A549 (cell line): ENCODE measurements at regions of chr5 and their contacts with region 1.

Region 1: GRCh38 chr5:10627160-10627701 is 63.4 kb downstream of the ANKRD33B start:
- DNase-seq: no peak
- ATAC-seq: peak; percentile 33 to 43; a peak in 5 of 6 replicates
- H3K4me3 ChIP-seq: peak overlapping the region; percentile 24
- H3K27ac ChIP-seq: peak overlapping the region; percentile 51 to 80
- H3K4me1 ChIP-seq: peaks cover 17% of the 10 kb centered on the region
- CTCF ChIP-seq: no peak
- EP300 ChIP-seq: no peak
- POLR2A ChIP-seq: no peak
- RAD21 ChIP-seq: no peak

Region 2: DNA sequence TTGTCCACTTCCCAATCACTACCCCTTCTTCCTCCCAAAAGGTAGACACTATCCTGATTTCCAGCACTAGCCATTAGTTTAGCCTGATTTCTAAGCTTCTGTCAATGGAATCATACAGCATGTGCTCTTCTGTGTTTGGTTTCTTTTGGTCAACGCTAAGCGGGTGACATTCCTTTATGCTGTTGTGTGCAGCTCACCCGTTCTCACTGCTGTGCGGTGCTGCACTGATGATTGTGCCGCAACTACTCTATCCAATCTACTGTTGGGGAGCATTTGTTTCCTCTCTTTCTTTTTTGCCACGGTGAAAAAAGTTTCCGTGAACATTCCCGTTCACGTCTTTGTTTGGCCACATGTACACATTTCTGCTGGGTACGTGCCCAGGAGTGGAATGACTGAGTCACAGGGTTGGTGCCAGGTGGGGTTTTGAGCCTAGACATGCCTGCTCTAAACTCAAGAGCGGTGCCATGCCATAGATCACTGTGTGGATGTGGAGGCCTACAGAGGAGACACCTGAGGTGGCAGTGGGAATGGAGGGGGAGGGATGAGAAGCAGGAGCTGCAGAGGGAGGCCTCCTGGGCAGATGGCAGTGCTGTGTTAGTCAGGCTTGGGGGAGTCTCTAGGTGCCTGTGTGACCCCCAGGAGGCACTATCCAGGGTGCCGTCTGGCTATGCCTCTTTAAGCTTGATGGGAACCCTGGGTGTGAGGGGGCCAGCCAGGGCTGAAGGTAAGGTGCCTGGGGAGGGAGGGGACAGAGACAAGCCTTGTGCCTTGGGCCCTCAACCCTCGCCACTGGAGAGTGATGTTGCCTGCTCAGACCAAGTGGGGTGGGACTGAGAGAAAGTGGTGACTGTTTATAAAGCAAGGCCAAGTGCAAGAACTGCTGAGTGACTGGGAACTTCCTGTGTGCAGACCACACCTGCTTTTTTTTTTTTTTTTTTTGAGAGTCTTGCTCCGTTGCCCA is 74.8 kb before region 1 on chr5:
- CTCF ChIA-PET with region 1: interaction called, 18 read pairs
- POLR2A ChIA-PET with region 1: interaction called, 7 read pairs
- DNase-seq: peak in 1 of 2 experiments; percentile 51
- ATAC-seq: no peak
- H3K4me3 ChIP-seq: no peak overlapping the region
- H3K27ac ChIP-seq: peak overlapping the region; percentile 85 to 92
- H3K4me1 ChIP-seq: peaks cover 76% of the 10 kb centered on the region
- CTCF ChIP-seq: no peak
- EP300 ChIP-seq: no peak
- POLR2A ChIP-seq: no peak
- RAD21 ChIP-seq: no peak

Region 3: GRCh38 chr5:10577371-10578292 is 49.6 kb before region 1 on chr5:
- CTCF ChIA-PET with region 1: interaction called, 26 read pairs
- POLR2A ChIA-PET with region 1: no interaction called
- DNase-seq: no peak
- ATAC-seq: peak in 1 of 2 experiments; percentile 47; a peak in 3 of 6 replicates
- H3K4me3 ChIP-seq: no peak overlapping the region
- H3K27ac ChIP-seq: peak overlapping the region in 1 of 2 experiments; percentile 26; a peak in 3 of 6 replicates
- H3K4me1 ChIP-seq: peaks cover 33% of the 10 kb centered on the region
- CTCF ChIP-seq: no peak
- EP300 ChIP-seq: no peak
- POLR2A ChIP-seq: no peak
- RAD21 ChIP-seq: no peak

Region 4: GRCh38 chr5:10601246-10602030 is 25.8 kb before region 1 on chr5:
- CTCF ChIA-PET with region 1: interaction called, 55 read pairs
- POLR2A ChIA-PET with region 1: no interaction called
- DNase-seq: peak; percentile 69 to 90
- ATAC-seq: peak; percentile 83 to 89
- H3K4me3 ChIP-seq: peak overlapping the region; percentile 18; the same call in 2 of the 3 replicates
- H3K27ac ChIP-seq: peak overlapping the region; percentile 77 to 87
- H3K4me1 ChIP-seq: peaks cover 43% of the 10 kb centered on the region
- CTCF ChIP-seq: no peak
- EP300 ChIP-seq: no peak; a peak in 1 of 5 replicates
- POLR2A ChIP-seq: no peak
- RAD21 ChIP-seq: no peak; a peak in 1 of 5 replicates

Region 5: GRCh38 chr5:10645146-10645545 is 17.9 kb after region 1 on chr5:
- CTCF ChIA-PET with region 1: interaction called, 12 read pairs
- POLR2A ChIA-PET with region 1: no interaction called
- DNase-seq: no peak
- ATAC-seq: peak in 1 of 2 experiments; percentile 24; a peak in 2 of 6 replicates
- H3K4me3 ChIP-seq: no peak overlapping the region
- H3K27ac ChIP-seq: no peak overlapping the region
- H3K4me1 ChIP-seq: no peaks in the 10 kb centered on the region
- CTCF ChIP-seq: no peak
- EP300 ChIP-seq: no peak
- POLR2A ChIP-seq: no peak
- RAD21 ChIP-seq: no peak

Region 6: GRCh38 chr5:10709409-10709808 is 82.2 kb after region 1 on chr5:
- CTCF ChIA-PET with region 1: no interaction called
- POLR2A ChIA-PET with region 1: no interaction called
- DNase-seq: no peak
- ATAC-seq: no peak
- H3K4me3 ChIP-seq: no peak overlapping the region
- H3K27ac ChIP-seq: no peak overlapping the region
- H3K4me1 ChIP-seq: no peaks in the 10 kb centered on the region
- CTCF ChIP-seq: no peak
- EP300 ChIP-seq: no peak
- POLR2A ChIP-seq: no peak
- RAD21 ChIP-seq: no peak